K562 (cell line): ENCODE measurements at regions of chr14 and their contacts with region 1.

Region 1: GRCh38 chr14:67557126-67557525 is 24.0 kb downstream of the PLEKHH1 start:
- DNase-seq: no peak
- ATAC-seq: no peak
- H3K4me3 ChIP-seq: no peak overlapping the region
- H3K27ac ChIP-seq: no peak overlapping the region
- H3K4me1 ChIP-seq: no peaks in the 10 kb centered on the region
- H3K27me3 ChIP-seq: no peaks in the 10 kb centered on the region
- CTCF ChIP-seq: no peak
- EP300 ChIP-seq: no peak
- POLR2A ChIP-seq: no peak
- RAD21 ChIP-seq: no peak

Region 2: GRCh38 chr14:67335781-67336180 is 221.3 kb before region 1 on chr14:
- CTCF ChIA-PET with region 1: no interaction called
- POLR2A ChIA-PET with region 1: no interaction called
- in situ Hi-C with region 1: no loop called
- intact Hi-C with region 1: no loop called
- DNase-seq: peak in 2 of 4 experiments; percentile 7 to 28
- ATAC-seq: no peak
- H3K4me3 ChIP-seq: no peak overlapping the region
- H3K27ac ChIP-seq: no peak overlapping the region
- H3K4me1 ChIP-seq: no peaks in the 10 kb centered on the region; a peak in 1 of 5 replicates
- H3K27me3 ChIP-seq: no peaks in the 10 kb centered on the region
- CTCF ChIP-seq: peak; percentile 13 to 43 (median 38); a peak in 4 of 6 replicates
- EP300 ChIP-seq: no peak
- POLR2A ChIP-seq: no peak
- RAD21 ChIP-seq: peak in 1 of 2 experiments; percentile 42; a peak in 2 of 4 replicates

Region 3: GRCh38 chr14:67541448-67542387 is 15.4 kb before region 1 on chr14:
- CTCF ChIA-PET with region 1: no interaction called
- POLR2A ChIA-PET with region 1: interaction called, 10 read pairs
- in situ Hi-C with region 1: no loop called
- intact Hi-C with region 1: no loop called
- DNase-seq: peak; percentile 38 to 79 (median 56)
- ATAC-seq: peak; percentile 98
- H3K4me3 ChIP-seq: peak overlapping the region; percentile 26
- H3K27ac ChIP-seq: peak overlapping the region; percentile 56
- H3K4me1 ChIP-seq: peaks cover 4% of the 10 kb centered on the region in 2 experiments; a peak in 3 of 5 replicates
- H3K27me3 ChIP-seq: no peaks in the 10 kb centered on the region
- CTCF ChIP-seq: no peak
- EP300 ChIP-seq: no peak
- POLR2A ChIP-seq: peak; percentile 85
- RAD21 ChIP-seq: no peak